Activated CD4-positive, alpha-beta memory T cell treated with anti-CD3 and anti-CD28 coated beads for 36 hours (primary cell): ENCODE measurements at regions of chrX and their contacts with region 1.

Region 1: DNA sequence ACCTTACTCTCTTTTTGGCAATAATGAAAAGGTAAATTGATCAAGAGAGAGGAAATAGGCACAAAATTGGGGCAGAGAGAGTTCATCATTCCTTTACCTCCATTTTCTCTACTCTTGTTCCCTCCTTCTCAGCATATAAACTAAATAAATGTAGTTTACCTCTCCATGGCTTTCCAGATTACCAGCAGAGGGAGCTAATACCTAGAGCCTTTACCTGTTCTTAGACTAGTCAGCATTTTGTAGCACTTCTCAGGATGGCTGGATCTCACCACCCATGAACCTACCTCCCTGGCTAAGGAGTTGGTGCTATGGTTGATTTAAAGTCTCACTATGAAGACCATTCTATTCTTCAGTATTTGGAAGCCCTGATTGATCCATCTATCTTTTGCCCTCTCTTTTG is 15.7 kb downstream of the OFD1 start:
- DNase-seq: no peak
- H3K4me3 Mint-ChIP-seq: no peak overlapping the region
- H3K27ac Mint-ChIP-seq: no peak overlapping the region
- H3K4me1 Mint-ChIP-seq: peaks cover 36% of the 10 kb centered on the region
- H3K27me3 Mint-ChIP-seq: no peaks in the 10 kb centered on the region

Region 2: GRCh38 chrX:13398073-13398823 is 352.0 kb before region 1 on chrX:
- CTCF ChIA-PET with region 1: no interaction called
- POLR2A ChIA-PET with region 1: no interaction called
- intact Hi-C with region 1: no loop called
- DNase-seq: peak; percentile 62
- H3K4me3 Mint-ChIP-seq: no peak overlapping the region
- H3K27ac Mint-ChIP-seq: no peak overlapping the region
- H3K4me1 Mint-ChIP-seq: peaks cover 11% of the 10 kb centered on the region
- H3K27me3 Mint-ChIP-seq: no peaks in the 10 kb centered on the region

Region 3: GRCh38 chrX:13506574-13506973 is 243.6 kb before region 1 on chrX:
- CTCF ChIA-PET with region 1: interaction called, 3 read pairs
- POLR2A ChIA-PET with region 1: no interaction called
- intact Hi-C with region 1: loop called (anchors 5 kb)
- DNase-seq: peak; percentile 57
- H3K4me3 Mint-ChIP-seq: no peak overlapping the region
- H3K27ac Mint-ChIP-seq: no peak overlapping the region
- H3K4me1 Mint-ChIP-seq: peaks cover 5% of the 10 kb centered on the region
- H3K27me3 Mint-ChIP-seq: no peaks in the 10 kb centered on the region

Region 4: GRCh38 chrX:13627311-13627710 is 122.9 kb before region 1 on chrX:
- CTCF ChIA-PET with region 1: no interaction called
- POLR2A ChIA-PET with region 1: no interaction called
- intact Hi-C with region 1: no loop called
- DNase-seq: no peak
- H3K4me3 Mint-ChIP-seq: no peak overlapping the region
- H3K27ac Mint-ChIP-seq: no peak overlapping the region
- H3K4me1 Mint-ChIP-seq: no peaks in the 10 kb centered on the region
- H3K27me3 Mint-ChIP-seq: peaks cover 1% of the 10 kb centered on the region

Region 5: DNA sequence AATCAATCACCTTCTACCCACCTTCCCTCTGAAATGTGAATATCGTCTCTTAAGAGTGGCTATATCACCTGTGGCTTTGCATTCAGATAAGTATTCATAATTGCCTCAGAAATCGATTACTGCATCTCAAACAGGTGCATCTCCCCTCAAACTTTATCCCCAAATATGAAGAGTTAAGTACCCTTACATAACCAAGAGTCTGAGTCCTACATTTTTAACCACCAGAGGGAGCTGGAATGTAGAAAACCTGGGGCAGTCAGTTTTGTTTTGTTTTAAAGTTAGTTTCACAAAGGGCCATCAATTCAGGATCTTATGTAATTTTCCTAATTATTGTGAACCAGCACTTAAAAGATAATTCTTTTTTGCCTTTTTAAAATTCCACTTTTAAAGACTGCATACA is 91.6 kb before region 1 on chrX:
- CTCF ChIA-PET with region 1: interaction called, 3 read pairs
- POLR2A ChIA-PET with region 1: no interaction called
- intact Hi-C with region 1: loop called (anchors 1 kb)
- DNase-seq: no peak
- H3K4me3 Mint-ChIP-seq: no peak overlapping the region
- H3K27ac Mint-ChIP-seq: peak overlapping the region; percentile 33
- H3K4me1 Mint-ChIP-seq: peaks cover 28% of the 10 kb centered on the region
- H3K27me3 Mint-ChIP-seq: no peaks in the 10 kb centered on the region